GM12878 (cell line): ENCODE measurements at regions of chr13 and their contacts with region 1.

Region 1: DNA sequence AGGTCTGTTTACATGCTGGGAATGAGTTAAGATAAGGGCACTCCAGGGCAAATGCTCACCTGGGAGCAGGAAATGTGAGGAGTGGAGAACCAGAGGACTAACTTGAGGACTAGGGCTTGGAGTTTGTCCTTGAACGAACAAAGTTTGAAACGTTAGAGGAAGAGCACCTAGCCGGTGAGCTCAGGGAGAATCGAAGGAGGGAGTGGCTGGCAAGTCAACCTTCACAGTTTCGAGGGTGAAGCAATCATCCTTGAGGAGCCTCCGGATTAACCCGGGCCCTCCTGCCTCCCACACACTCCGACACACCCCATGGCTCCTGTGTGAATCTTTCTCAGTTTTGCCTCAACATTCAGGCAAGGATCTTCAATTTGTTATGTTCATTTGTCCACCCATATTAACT is 58.6 kb downstream of the LMO7 start:
- DNase-seq: no peak
- ATAC-seq: no peak
- H3K4me3 ChIP-seq: no peak overlapping the region
- H3K27ac ChIP-seq: no peak overlapping the region
- H3K4me1 ChIP-seq: no peaks in the 10 kb centered on the region
- H3K27me3 ChIP-seq: no peaks in the 10 kb centered on the region
- CTCF ChIP-seq: no peak
- EP300 ChIP-seq: no peak
- POLR2A ChIP-seq: no peak
- RAD21 ChIP-seq: no peak

Region 2: DNA sequence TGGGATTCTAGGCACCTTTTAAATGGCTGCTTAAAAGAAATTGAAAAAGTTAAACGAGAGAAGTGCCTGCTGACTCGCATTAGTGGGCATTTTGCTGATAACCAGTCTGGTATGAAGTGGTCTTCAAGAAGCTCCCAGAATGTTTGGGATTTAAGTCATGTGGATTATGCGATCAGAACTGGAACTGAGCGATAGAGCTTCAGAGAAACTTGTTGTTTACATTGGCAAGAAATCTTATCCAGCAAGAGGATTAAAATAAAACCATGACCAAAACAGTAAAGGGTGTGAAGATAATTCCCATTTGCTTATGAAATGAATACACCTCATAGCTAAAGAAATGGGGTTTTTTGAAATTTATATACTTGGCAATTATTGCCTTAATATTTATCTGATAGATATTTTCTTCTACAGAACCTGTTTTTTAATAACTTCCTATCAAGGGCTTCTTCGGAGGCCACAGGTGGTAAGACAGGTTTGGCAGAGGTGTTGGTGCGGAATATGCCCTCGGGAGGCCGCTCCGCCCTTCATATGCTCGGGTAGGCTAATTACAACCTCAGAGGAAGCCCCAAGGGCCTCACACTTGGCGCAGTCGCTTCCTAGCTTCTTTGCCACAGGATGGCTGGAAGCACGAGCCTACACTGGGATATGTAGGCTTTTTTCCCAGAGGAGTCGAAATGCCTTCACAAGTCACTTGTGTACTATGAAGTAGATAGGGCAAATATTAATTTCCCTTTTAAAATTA is 10.0 kb after region 1 on chr13:
- CTCF ChIA-PET with region 1: interaction called, 52 read pairs
- POLR2A ChIA-PET with region 1: no interaction called
- RAD21 ChIA-PET with region 1: interaction called, 10 read pairs
- SMC1A ChIA-PET with region 1: interaction called, 8 read pairs
- in situ Hi-C with region 1: no loop called
- intact Hi-C with region 1: no loop called
- DNase-seq: no peak
- ATAC-seq: no peak
- H3K4me3 ChIP-seq: no peak overlapping the region
- H3K27ac ChIP-seq: no peak overlapping the region
- H3K4me1 ChIP-seq: no peaks in the 10 kb centered on the region
- H3K27me3 ChIP-seq: no peaks in the 10 kb centered on the region
- CTCF ChIP-seq: no peak
- EP300 ChIP-seq: no peak
- POLR2A ChIP-seq: no peak
- RAD21 ChIP-seq: no peak

Region 3: GRCh38 chr13:75760131-75761021 is 65.7 kb after region 1 on chr13:
- CTCF ChIA-PET with region 1: interaction called, 55 read pairs
- POLR2A ChIA-PET with region 1: interaction called, 4 read pairs
- RAD21 ChIA-PET with region 1: interaction called, 72 read pairs
- SMC1A ChIA-PET with region 1: interaction called, 82 read pairs
- in situ Hi-C with region 1: no loop called
- intact Hi-C with region 1: no loop called
- DNase-seq: no peak
- ATAC-seq: no peak
- H3K4me3 ChIP-seq: no peak overlapping the region
- H3K27ac ChIP-seq: peak overlapping the region; percentile 93
- H3K4me1 ChIP-seq: peaks cover 15% of the 10 kb centered on the region
- H3K27me3 ChIP-seq: no peaks in the 10 kb centered on the region
- CTCF ChIP-seq: no peak
- EP300 ChIP-seq: no peak
- POLR2A ChIP-seq: no peak
- RAD21 ChIP-seq: peak; percentile 20; the same call in 1 of the 2 replicates

Region 4: DNA sequence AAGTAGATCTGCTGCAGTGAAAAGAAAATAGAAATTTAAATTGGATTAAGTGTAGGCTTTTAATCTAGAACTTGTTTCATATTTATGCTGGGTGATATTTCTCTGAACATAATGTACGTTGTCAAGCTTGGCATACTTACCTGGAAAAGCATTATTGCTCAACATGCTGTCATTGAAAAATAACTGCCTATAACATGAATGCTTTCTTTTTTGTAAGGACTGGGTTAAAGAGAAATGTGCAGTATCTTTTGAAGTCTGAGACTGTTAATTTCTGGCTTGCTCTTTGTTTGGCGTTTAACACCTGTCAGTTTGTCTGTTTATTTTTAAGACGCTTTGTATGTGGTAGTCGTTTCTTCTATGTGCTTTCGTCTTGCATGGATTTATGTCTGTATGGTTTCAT is 116.6 kb after region 1 on chr13:
- CTCF ChIA-PET with region 1: interaction called, 18 read pairs
- POLR2A ChIA-PET with region 1: no interaction called
- RAD21 ChIA-PET with region 1: interaction called, 3 read pairs
- SMC1A ChIA-PET with region 1: interaction called, 15 read pairs
- in situ Hi-C with region 1: no loop called
- intact Hi-C with region 1: no loop called
- DNase-seq: no peak
- ATAC-seq: no peak
- H3K4me3 ChIP-seq: no peak overlapping the region
- H3K27ac ChIP-seq: no peak overlapping the region
- H3K4me1 ChIP-seq: no peaks in the 10 kb centered on the region
- H3K27me3 ChIP-seq: no peaks in the 10 kb centered on the region
- CTCF ChIP-seq: no peak
- EP300 ChIP-seq: no peak
- POLR2A ChIP-seq: no peak
- RAD21 ChIP-seq: no peak

Region 5: GRCh38 chr13:75864718-75865117 is 170.0 kb after region 1 on chr13:
- CTCF ChIA-PET with region 1: interaction called, 296 read pairs
- POLR2A ChIA-PET with region 1: no interaction called
- RAD21 ChIA-PET with region 1: interaction called, 184 read pairs
- SMC1A ChIA-PET with region 1: interaction called, 228 read pairs
- in situ Hi-C with region 1: loop called (anchors 5 kb)
- intact Hi-C with region 1: no loop called
- DNase-seq: no peak
- ATAC-seq: no peak
- H3K4me3 ChIP-seq: no peak overlapping the region
- H3K27ac ChIP-seq: no peak overlapping the region
- H3K4me1 ChIP-seq: no peaks in the 10 kb centered on the region
- H3K27me3 ChIP-seq: no peaks in the 10 kb centered on the region; a peak in 1 of 4 replicates
- CTCF ChIP-seq: no peak
- EP300 ChIP-seq: no peak
- POLR2A ChIP-seq: no peak
- RAD21 ChIP-seq: no peak

Region 6: DNA sequence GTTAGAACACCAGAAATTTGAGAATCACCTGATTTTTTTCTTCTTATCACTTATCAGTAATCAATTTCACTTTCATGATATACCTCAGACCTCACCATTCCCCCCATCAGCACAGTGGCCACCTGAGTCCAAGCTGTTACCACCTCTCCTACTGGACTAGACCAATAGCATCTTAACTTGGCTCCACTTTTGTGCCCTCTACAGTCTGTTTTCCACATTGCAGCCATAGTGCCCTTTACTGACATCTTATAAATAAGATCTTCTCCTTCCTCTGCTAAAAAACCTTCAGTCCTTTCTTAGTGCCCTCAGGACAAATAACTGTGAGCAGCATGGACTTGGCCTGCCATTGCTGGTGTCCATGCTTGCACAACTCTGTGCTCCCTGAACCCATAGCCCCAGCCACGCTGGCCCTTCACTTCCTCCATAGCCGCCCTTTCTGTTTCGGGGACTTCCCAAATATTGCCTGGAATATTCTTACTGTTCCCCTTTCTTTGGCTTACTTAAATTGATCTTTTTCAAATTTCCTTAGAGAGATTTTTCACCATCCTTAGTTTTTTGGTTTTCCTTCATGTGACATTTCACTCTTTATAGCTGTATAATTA is 322.2 kb after region 1 on chr13:
- CTCF ChIA-PET with region 1: interaction called, 33 read pairs
- POLR2A ChIA-PET with region 1: no interaction called
- RAD21 ChIA-PET with region 1: interaction called, 7 read pairs
- SMC1A ChIA-PET with region 1: interaction called, 7 read pairs
- in situ Hi-C with region 1: loop called (anchors 5 kb)
- intact Hi-C with region 1: loop called (anchors 2 kb)
- DNase-seq: no peak
- ATAC-seq: peak; percentile 90
- H3K4me3 ChIP-seq: no peak overlapping the region
- H3K27ac ChIP-seq: no peak overlapping the region
- H3K4me1 ChIP-seq: no peaks in the 10 kb centered on the region
- H3K27me3 ChIP-seq: no peaks in the 10 kb centered on the region
- CTCF ChIP-seq: peak; percentile 57 to 72 (median 60); a peak in 5 of 6 replicates
- EP300 ChIP-seq: no peak
- POLR2A ChIP-seq: no peak
- RAD21 ChIP-seq: peak; percentile 69